Activated CD4-positive, alpha-beta T cell treated with anti-CD3 and anti-CD28 coated beads for 36 hours (primary cell): ENCODE measurements at regions of chr5 and their contacts with region 1.

Region 1: DNA sequence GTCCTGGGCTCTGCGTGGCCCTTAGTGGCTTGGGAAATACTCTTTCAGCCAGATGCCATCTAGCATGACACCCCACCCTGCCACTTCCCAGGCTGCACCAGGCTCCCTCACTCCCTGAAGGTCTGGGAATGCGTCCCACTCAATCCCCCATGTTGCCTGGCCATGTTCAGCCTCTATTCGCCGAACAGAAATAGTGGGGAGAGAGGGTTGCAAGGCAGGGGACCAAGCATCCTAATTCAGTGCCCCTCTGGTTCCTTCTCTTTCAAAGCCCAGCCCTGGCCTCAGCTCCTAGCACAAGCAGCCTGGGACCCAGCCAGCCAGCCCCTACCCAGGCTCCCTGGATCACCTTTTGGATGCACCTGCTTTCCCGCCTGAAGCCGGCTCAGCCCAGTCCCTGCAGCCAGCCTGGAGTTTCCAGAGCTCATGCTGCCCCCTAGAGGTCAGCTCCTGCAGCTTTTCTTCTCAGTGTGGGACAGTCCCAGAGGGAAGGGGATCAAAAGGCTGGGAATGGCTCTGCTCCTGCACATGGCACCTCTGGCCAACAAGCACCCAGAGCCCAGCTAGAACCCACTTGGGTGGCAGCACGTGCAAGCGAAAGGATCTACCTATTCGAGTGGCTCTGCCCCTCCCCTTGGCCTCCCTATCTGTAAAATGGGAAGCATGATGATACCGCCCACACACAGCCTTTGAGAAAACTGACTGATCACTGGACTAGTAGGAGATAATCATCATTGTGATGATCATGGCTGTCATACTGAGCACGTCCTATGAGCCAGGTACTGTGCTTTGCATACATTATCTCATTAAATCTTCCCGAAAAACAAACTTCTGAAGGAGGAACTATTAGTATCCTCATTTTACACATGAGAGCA is 48.7 kb upstream of the C5orf58 start:
- DNase-seq: peak; percentile 75
- ATAC-seq: peak; percentile 88
- H3K4me3 Mint-ChIP-seq: no peak overlapping the region
- H3K27ac Mint-ChIP-seq: no peak overlapping the region
- H3K4me1 Mint-ChIP-seq: peaks cover 2% of the 10 kb centered on the region
- H3K27me3 Mint-ChIP-seq: no peaks in the 10 kb centered on the region

Region 2: GRCh38 chr5:170173235-170173634 is 10.8 kb before region 1 on chr5:
- CTCF ChIA-PET with region 1: interaction called, 26 read pairs
- POLR2A ChIA-PET with region 1: no interaction called
- intact Hi-C with region 1: no loop called
- DNase-seq: no peak
- ATAC-seq: no peak
- H3K4me3 Mint-ChIP-seq: no peak overlapping the region
- H3K27ac Mint-ChIP-seq: no peak overlapping the region
- H3K4me1 Mint-ChIP-seq: no peaks in the 10 kb centered on the region
- H3K27me3 Mint-ChIP-seq: no peaks in the 10 kb centered on the region

Region 3: DNA sequence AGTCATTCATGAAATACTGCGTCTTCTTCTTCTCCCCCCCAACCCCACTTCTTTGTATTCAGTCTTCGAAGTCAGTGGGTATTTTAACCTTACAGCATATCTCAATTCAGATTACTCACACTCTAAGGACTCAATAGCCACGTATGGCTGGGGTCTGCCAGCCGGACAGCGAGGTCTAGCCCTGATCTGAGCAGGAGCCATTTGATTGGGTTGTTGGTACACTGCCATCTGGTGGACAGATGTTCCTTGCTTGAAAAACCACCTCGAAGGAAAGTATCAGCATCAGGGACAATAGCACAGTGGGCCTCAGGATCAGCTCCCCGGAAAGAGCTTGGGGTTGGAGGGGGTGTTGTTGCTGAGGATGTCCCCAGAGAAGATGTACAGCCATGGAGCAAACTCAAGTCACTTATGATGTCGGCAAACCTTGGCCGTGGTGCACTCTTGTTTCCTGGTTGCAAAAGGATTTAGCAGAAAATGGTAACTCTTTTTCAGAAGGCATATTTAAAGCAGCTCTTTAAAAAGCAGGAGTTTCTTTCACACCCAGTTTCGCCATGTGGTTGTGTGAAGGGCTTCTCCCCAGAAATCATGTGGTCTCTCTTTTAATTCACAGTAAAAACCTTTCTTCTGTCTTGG is 236.8 kb after region 1 on chr5:
- CTCF ChIA-PET with region 1: interaction called, 3 read pairs
- POLR2A ChIA-PET with region 1: no interaction called
- intact Hi-C with region 1: loop called in 1 of 2 experiments (anchors 1 kb)
- DNase-seq: peak; percentile 68
- ATAC-seq: peak; percentile 53
- H3K4me3 Mint-ChIP-seq: no peak overlapping the region
- H3K27ac Mint-ChIP-seq: no peak overlapping the region
- H3K4me1 Mint-ChIP-seq: peaks cover 11% of the 10 kb centered on the region
- H3K27me3 Mint-ChIP-seq: no peaks in the 10 kb centered on the region